ENCODE measurements at regions of chr19 and their contacts with region 1.

Region 1: DNA sequence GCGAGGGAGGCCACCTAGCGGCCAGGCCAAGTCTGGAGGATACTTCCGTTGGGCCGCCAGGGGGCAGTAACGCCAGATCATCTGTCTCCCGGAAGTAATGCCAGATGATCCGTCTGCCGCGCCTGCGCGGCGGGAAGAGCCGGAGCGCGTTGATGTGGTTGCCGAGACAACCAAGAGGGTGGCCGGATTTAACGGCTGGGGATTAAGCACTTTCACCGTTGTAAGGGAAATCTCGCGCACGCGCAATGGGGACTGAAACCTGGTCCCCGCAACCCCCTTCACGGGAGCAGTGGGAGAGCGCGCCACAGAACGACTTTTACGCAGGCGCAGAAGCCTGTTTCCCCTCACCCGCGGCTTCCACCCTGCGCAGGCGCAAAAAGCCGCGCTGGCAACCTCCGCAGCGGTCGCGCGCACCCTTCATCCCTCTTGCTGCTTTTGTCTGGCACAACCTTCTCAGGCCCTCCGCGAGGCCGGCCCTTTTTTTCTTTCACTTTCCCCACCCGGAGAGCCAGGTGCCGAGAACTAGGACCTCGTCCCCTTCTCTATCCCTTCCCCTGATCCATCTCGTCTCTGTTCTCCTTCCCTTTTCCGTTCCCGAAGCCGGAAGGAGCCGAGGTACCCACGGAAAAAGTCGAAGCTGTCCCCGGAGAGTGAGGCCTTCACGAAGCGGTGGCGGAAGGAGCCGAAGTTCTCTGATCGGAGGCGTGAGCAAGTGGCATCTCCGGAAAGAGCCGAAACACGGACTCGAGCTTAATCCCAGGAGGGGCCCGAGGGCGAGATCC is 886 bp upstream of the U2AF2 start:
- DNase-seq: peak; percentile 100
- ATAC-seq: peak; percentile 87
- H3K4me3 Mint-ChIP-seq: peak overlapping the region; percentile 93
- H3K27ac Mint-ChIP-seq: peak overlapping the region; percentile 98
- H3K4me1 Mint-ChIP-seq: peaks cover 37% of the 10 kb centered on the region
- H3K27me3 Mint-ChIP-seq: peaks cover 3% of the 10 kb centered on the region; the same call in 1 of the 2 replicates
- CTCF ChIP-seq: peak; percentile 91

Region 2: GRCh38 chr19:55605207-55605636 is 48.7 kb before region 1 on chr19:
- CTCF ChIA-PET with region 1: interaction called, 11 read pairs
- POLR2A ChIA-PET with region 1: interaction called, 9 read pairs
- DNase-seq: peak; percentile 98
- ATAC-seq: peak; percentile 58
- H3K4me3 Mint-ChIP-seq: peak overlapping the region; percentile 83
- H3K27ac Mint-ChIP-seq: peak overlapping the region; percentile 99
- H3K4me1 Mint-ChIP-seq: peaks cover 27% of the 10 kb centered on the region
- H3K27me3 Mint-ChIP-seq: no peaks in the 10 kb centered on the region
- CTCF ChIP-seq: no peak

Region 3: DNA sequence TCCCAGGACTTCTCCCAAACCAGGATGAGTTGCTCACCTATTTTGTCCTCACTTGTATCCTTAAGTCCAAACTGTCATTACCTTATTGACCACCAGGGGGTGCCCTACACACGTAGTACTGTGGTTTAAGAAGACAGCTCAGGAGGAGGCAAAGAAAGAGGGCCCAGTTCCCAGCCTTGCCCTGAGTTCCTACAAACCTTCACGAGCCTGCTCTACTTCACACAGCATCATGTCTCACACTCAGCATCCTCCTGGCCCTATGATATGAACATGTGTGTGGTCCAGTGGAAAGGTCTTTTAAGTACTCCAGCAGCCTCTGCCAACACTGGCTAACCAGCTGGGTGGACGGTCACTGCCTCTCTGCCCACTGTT is 21.5 kb before region 1 on chr19:
- CTCF ChIA-PET with region 1: interaction called, 43 read pairs
- POLR2A ChIA-PET with region 1: interaction called, 8 read pairs
- DNase-seq: peak; percentile 92
- ATAC-seq: peak; percentile 61
- H3K4me3 Mint-ChIP-seq: peak overlapping the region; percentile 20; the same call in 1 of the 2 replicates
- H3K27ac Mint-ChIP-seq: peak overlapping the region; percentile 80
- H3K4me1 Mint-ChIP-seq: peaks cover 29% of the 10 kb centered on the region
- H3K27me3 Mint-ChIP-seq: peaks cover 9% of the 10 kb centered on the region; the same call in 1 of the 2 replicates
- CTCF ChIP-seq: peak; percentile 87

Region 4: GRCh38 chr19:55670280-55671053 is 16.5 kb after region 1 on chr19:
- CTCF ChIA-PET with region 1: interaction called, 57 read pairs
- POLR2A ChIA-PET with region 1: interaction called, 4 read pairs
- DNase-seq: peak; percentile 31
- ATAC-seq: no peak
- H3K4me3 Mint-ChIP-seq: no peak overlapping the region
- H3K27ac Mint-ChIP-seq: peak overlapping the region; percentile 73
- H3K4me1 Mint-ChIP-seq: peaks cover 32% of the 10 kb centered on the region
- H3K27me3 Mint-ChIP-seq: no peaks in the 10 kb centered on the region
- CTCF ChIP-seq: no peak

Measured in WTC11 (cell line).